Lower leg skin (tissue), 4 donors: ENCODE measurements at regions of chr5 and their contacts with region 1.

Region 1: DNA sequence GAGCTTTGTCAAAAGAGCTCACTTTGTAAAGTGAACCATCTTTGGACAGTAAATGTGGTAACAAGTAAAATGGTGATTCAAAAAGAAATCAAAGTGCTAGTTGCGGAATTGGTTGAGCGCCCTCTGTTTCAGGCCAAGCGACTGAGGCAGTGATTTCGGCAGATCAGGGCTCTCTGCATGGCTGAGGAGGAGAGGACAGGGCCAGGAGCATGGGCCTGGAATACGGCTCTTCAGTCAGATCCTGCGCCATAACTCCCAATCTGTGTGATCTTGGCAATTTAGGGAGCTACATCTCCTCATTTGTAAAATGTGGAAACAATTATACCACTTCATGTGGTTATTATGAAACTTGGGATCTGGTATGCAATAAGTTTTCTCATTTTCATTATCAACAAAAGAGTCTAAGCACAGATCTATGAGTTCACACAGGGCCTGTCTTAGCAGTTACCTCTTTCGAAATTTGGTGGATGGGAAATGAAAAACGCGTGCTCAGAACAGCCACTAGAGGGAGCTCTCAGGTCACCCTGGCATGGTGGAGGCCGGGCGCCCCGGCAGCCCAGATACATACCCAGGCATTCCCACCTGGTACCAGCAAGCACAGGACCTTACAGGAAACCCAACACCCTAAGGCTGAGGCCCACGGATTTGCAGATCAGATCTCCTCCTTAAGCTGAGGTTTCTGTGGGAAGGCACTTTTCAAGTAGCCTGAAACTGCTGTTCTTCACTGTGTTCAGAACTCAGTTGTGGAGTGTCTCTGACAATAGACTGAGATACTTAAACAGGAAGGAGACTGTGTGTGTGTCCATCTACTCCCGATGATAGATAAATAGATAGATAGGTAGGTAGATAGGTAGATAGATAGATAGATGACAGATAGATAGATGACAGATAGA is 303.7 kb downstream of the RAB3C start:
- DNase-seq: peak in 1 of 2 donors; percentile 87
- H3K4me3 ChIP-seq: no peak overlapping the region
- CTCF ChIP-seq: no peak
- POLR2A ChIP-seq: no peak

Region 2: DNA sequence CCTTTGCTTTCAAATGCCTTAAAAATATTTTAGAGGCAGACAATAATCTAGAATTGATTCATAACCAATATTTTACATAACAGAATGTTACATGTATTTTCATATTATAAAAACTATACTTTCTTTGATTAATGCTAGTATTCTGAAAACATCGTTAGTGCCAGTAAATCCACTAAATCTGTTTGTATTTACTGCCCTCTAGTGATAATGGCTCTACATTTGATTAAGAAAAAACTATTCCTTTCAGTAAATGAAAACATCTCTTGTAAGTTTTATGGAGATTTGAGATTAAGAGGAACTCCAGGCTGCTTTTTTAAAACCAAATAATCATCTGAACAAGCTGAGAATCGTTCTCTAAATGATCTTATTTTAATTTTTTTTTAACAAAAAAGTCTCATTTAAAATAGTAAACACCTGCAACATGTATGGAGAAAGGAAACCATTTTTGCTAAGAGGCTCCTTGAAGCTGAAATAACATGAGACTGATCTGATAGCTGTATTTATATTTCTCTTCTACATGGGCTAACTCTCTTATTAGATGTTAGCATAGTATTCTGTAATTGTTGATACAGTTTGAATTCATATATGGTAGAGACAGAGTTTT is 121.0 kb after region 1 on chr5:
- intact Hi-C with region 1: loop called (anchors 10 kb)
- DNase-seq: no peak
- H3K4me3 ChIP-seq: no peak overlapping the region
- CTCF ChIP-seq: no peak
- POLR2A ChIP-seq: no peak

Region 3: GRCh38 chr5:59188419-59189225 is 302.1 kb after region 1 on chr5:
- intact Hi-C with region 1: loop called (anchors 10 kb)
- DNase-seq: peak; percentile 52 to 90
- H3K4me3 ChIP-seq: no peak overlapping the region
- CTCF ChIP-seq: peak in 1 of 3 donors; percentile 55
- POLR2A ChIP-seq: no peak

Region 4: DNA sequence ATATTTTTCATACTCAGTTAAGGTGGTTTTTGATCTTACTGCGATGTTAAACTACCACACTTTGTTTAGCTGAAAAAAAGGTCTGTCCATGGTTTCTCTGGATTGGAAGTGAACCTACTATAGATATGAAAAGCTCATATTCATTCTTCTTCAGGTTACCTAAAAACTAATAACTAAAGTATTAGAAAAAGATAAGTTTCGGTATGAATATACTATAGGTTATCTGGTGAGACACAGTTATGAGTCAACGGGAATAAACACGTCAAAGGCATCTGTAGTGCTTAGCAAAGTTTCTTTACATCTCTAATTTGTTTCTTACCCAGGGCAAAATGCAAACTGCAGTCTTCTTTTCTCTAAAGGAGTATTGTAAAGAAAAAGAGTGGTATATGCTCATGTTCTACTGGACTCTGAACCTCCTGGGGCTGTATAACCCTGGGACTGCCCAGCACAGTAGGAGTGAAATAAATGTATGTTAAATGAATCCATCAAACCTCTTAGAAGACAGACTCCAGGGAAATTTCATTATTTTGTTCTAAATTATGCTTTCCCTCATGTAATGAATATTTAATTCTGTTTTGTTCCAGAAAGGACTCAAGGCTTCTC is 485.1 kb after region 1 on chr5:
- intact Hi-C with region 1: loop called (anchors 10 kb)
- DNase-seq: no peak
- H3K4me3 ChIP-seq: no peak overlapping the region
- CTCF ChIP-seq: no peak
- POLR2A ChIP-seq: no peak